Activated naive CD4-positive, alpha-beta T cell treated with anti-CD3 and anti-CD28 coated beads for 36 hours (primary cell): ENCODE measurements at regions of chr14 and their contacts with region 1.

Region 1: DNA sequence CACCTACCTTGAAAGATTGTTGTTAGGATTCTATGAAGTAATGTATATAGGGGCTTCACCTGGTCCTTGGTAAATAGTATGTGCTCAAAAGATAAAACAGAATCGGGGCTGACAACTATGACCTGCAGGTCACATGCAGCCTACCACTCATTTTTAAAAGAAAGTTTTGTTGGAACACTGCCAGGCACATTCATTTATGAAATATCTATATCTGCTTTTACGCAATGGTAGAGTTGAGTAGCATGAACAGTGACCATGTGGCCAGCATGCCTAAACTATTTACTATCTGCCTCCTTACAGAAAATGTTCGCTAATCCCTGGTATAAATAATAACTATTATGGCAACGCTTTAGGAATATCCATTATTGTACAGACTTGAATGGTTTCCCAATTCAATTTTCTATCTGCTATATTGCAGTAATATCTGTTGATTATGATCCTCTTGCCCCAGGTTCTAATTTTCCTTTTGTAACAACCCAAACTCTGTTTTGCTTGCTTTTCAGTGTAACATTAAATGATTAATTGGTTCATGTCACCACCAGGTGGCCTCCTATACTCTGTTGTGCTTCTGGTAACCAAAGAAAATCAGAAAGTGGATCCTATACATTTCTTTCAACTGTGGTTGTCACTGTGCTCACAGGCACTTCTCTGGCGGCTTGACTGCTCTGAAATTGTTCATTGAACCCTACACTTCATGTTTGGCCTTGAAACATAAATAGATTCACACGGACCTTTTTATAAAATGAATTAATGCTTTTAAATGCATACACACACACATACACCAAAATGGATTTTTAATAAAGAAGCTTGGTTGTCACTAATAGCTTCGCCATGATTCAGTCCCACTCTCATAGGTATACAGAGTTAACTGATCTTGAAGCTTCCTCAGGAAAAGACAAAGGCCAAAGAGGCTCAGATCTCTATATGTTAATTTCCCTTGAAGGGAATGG is 227.7 kb upstream of the NPAS3 start:
- DNase-seq: peak; percentile 32
- H3K4me3 Mint-ChIP-seq: no peak overlapping the region
- H3K27ac Mint-ChIP-seq: no peak overlapping the region
- H3K4me1 Mint-ChIP-seq: peaks cover 2% of the 10 kb centered on the region
- H3K27me3 Mint-ChIP-seq: no peaks in the 10 kb centered on the region

Region 2: GRCh38 chr14:32939254-32940065 is 228.5 kb after region 1 on chr14:
- CTCF ChIA-PET with region 1: no interaction called
- intact Hi-C with region 1: loop called (anchors 5 kb)
- DNase-seq: peak; percentile 60
- H3K4me3 Mint-ChIP-seq: peak overlapping the region; percentile 69
- H3K27ac Mint-ChIP-seq: no peak overlapping the region
- H3K4me1 Mint-ChIP-seq: peaks cover 11% of the 10 kb centered on the region
- H3K27me3 Mint-ChIP-seq: peaks cover 57% of the 10 kb centered on the region

Region 3: GRCh38 chr14:33432407-33433023 is 721.5 kb after region 1 on chr14:
- CTCF ChIA-PET with region 1: no interaction called
- intact Hi-C with region 1: loop called (anchors 5 kb)
- DNase-seq: peak; percentile 18
- H3K4me3 Mint-ChIP-seq: no peak overlapping the region
- H3K27ac Mint-ChIP-seq: no peak overlapping the region
- H3K4me1 Mint-ChIP-seq: peaks cover 5% of the 10 kb centered on the region
- H3K27me3 Mint-ChIP-seq: no peaks in the 10 kb centered on the region